ENCODE measurements at regions of chr5 and their contacts with region 1.

Region 1: DNA sequence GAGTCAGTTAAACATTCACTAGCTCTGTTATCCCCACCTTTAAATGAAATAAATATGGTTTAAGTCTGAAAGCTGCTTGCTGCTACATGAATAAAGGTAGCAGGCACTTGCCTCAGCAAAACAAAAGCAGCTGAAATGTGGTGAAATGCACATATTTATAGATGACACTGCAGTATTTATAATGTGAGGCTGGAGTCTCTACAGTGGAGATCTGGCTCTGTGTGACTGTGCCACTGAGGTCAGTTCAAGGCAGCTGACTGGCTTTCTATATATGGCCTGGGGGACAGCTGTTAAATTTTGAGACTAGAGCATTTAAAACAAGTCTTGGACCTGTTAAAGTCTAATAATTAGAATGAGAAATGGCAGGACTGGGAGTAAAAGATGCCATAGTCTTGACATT is 859.6 kb upstream of the SEMA6A start:
- DNase-seq: no peak
- H3K4me3 ChIP-seq: no peak overlapping the region
- H3K27ac ChIP-seq: peak overlapping the region in 3 of 4 donors; percentile 66 to 74 (median 71)
- H3K4me1 ChIP-seq: peaks cover 0 to 67% (median 40%) of the 10 kb centered on the region in 4 donors
- H3K27me3 ChIP-seq: no peaks in the 10 kb centered on the region
- CTCF ChIP-seq: no peak
- EP300 ChIP-seq: no peak
- POLR2A ChIP-seq: no peak

Region 2: GRCh38 chr5:116521173-116521872 is 912.9 kb before region 1 on chr5:
- intact Hi-C with region 1: loop called (anchors 10 kb)
- DNase-seq: no peak
- H3K4me3 ChIP-seq: no peak overlapping the region
- H3K27ac ChIP-seq: peak overlapping the region in 2 of 4 donors; percentile 3 to 12
- H3K4me1 ChIP-seq: peaks cover 0 to 93% (median 55%) of the 10 kb centered on the region in 4 donors
- H3K27me3 ChIP-seq: no peaks in the 10 kb centered on the region
- CTCF ChIP-seq: no peak
- EP300 ChIP-seq: no peak
- POLR2A ChIP-seq: no peak

Region 3: DNA sequence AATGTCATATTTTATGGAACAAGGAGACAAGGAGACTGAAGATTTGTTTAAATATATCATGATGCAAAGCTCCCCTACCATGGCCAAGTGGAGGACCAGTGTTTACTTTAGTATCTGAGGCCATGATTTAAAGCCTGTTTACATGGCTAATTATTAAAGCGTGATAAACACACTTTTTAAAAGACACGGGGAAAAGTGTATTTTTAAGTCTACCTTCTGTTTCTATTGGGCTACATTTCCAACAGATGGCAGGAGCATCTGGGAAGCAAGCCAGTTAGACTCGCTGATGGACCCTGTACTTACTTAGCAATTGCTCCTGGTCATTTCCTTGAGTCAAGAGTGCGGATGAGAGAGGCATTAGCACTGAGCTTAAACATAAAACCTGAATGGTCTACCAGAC is 379.3 kb before region 1 on chr5:
- intact Hi-C with region 1: loop called (anchors 10 kb)
- DNase-seq: no peak
- H3K4me3 ChIP-seq: no peak overlapping the region
- H3K27ac ChIP-seq: peak overlapping the region in 3 of 4 donors; percentile 15 to 37 (median 26)
- H3K4me1 ChIP-seq: peaks cover 0 to 25% (median 18%) of the 10 kb centered on the region in 4 donors
- H3K27me3 ChIP-seq: no peaks in the 10 kb centered on the region
- CTCF ChIP-seq: no peak
- EP300 ChIP-seq: no peak
- POLR2A ChIP-seq: no peak

Region 4: GRCh38 chr5:117473165-117473564 is 38.9 kb after region 1 on chr5:
- intact Hi-C with region 1: no loop called
- DNase-seq: no peak
- H3K4me3 ChIP-seq: no peak overlapping the region
- H3K27ac ChIP-seq: no peak overlapping the region
- H3K4me1 ChIP-seq: peaks cover 0 to 15% (median under 1%) of the 10 kb centered on the region in 4 donors
- H3K27me3 ChIP-seq: no peaks in the 10 kb centered on the region
- CTCF ChIP-seq: no peak
- EP300 ChIP-seq: no peak
- POLR2A ChIP-seq: no peak

Region 5: GRCh38 chr5:117638581-117638980 is 204.3 kb after region 1 on chr5:
- intact Hi-C with region 1: no loop called
- DNase-seq: no peak
- H3K4me3 ChIP-seq: no peak overlapping the region
- H3K27ac ChIP-seq: no peak overlapping the region
- H3K4me1 ChIP-seq: no peaks in the 10 kb centered on the region
- H3K27me3 ChIP-seq: no peaks in the 10 kb centered on the region
- CTCF ChIP-seq: no peak
- EP300 ChIP-seq: no peak
- POLR2A ChIP-seq: no peak

Measured in sigmoid colon (tissue), 7 donors.